CD4-positive, alpha-beta memory T cell (primary cell): ENCODE measurements at regions of chr3 and their contacts with region 1.

Region 1: DNA sequence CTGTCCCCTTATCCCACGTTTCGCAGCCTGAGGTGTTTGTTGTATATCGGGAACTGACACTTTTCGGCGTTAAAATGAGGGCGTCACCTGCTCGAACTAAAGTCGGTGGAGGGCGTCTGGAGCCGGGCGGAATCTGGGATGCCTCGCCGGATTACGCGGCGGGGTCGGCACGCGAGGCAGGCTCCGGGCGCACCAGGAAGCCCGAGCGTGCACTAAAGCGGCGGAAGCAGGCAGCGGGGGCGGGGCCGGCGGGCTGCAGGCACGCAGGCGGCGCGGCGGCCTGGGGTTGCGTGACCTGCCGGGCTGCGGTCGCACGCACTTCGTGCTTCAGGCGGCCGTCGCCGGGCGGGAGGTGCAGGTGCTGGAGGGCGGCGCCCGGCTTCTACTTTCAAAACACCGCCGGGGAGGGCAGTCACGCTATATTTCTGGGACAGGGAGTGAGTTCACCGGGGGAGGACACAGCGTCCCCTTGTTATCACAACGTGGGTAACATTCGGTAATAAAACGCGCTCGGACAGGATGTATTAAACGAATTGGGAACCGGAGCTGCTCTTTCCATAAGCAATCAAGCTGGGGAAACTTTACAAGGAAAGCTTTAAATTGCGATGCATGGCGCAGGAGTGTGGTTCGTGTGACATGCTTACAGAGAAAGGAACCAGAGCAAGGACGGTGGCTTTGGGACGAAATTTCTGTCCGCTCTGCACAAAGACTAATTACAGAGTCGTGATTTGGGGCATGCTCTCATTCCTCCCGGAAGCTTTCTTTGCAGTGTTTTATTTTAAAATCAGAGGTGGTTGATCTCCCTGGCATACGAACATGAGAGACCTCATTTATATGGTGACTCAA is 9.1 kb upstream of the LEKR1 start:
- DNase-seq: peak; percentile 79 to 85 (median 84)
- H3K4me3 ChIP-seq: peak overlapping the region; percentile 43 to 59
- H3K4me3 Mint-ChIP-seq: peak overlapping the region; percentile 91 to 97 (median 96)
- H3K27ac ChIP-seq: peak overlapping the region; percentile 73
- H3K27ac Mint-ChIP-seq: peak overlapping the region; percentile 91 to 98 (median 94)
- H3K4me1 ChIP-seq: peaks cover 39% of the 10 kb centered on the region
- H3K4me1 Mint-ChIP-seq: peaks cover 22 to 45% (median 35%) of the 10 kb centered on the region in 4 donors
- H3K27me3 ChIP-seq: no peaks in the 10 kb centered on the region
- H3K27me3 Mint-ChIP-seq: no peaks in the 10 kb centered on the region

Region 2: GRCh38 chr3:156483961-156484787 is 332.8 kb before region 1 on chr3:
- CTCF ChIA-PET with region 1: no interaction called
- POLR2A ChIA-PET with region 1: interaction called, 3 read pairs
- intact Hi-C with region 1: loop called (anchors 5 kb)
- DNase-seq: peak; percentile 55 to 81 (median 64)
- H3K4me3 ChIP-seq: peak overlapping the region; percentile 42 to 55
- H3K4me3 Mint-ChIP-seq: peak overlapping the region; percentile 21 to 87 (median 77)
- H3K27ac ChIP-seq: peak overlapping the region; percentile 63
- H3K27ac Mint-ChIP-seq: peak overlapping the region; percentile 77 to 94 (median 92)
- H3K4me1 ChIP-seq: peaks cover 43% of the 10 kb centered on the region
- H3K4me1 Mint-ChIP-seq: peaks cover 32 to 52% (median 39%) of the 10 kb centered on the region in 4 donors
- H3K27me3 ChIP-seq: no peaks in the 10 kb centered on the region
- H3K27me3 Mint-ChIP-seq: no peaks in the 10 kb centered on the region

Region 3: DNA sequence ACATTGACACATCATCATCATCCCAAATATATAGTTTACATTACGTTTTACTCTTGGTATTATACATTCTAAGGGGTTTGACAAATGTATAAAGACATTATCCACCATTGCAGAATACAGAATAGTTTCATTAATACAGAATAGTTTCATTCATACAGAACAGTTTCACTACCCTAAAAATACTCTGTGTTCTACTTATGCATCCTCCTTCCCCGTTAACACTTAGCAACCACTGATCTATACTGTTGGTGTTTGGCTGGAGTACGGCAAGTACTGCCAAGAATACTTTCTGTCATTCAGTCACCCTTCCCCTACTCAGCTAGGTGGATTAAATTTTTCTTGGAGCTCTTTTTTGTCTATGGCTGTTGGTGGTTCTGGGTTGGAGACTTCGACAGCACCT is 42.6 kb after region 1 on chr3:
- CTCF ChIA-PET with region 1: no interaction called
- POLR2A ChIA-PET with region 1: no interaction called
- intact Hi-C with region 1: no loop called
- DNase-seq: no peak
- H3K4me3 ChIP-seq: no peak overlapping the region
- H3K4me3 Mint-ChIP-seq: no peak overlapping the region
- H3K27ac ChIP-seq: no peak overlapping the region
- H3K27ac Mint-ChIP-seq: no peak overlapping the region
- H3K4me1 ChIP-seq: no peaks in the 10 kb centered on the region
- H3K4me1 Mint-ChIP-seq: no peaks in the 10 kb centered on the region
- H3K27me3 ChIP-seq: no peaks in the 10 kb centered on the region
- H3K27me3 Mint-ChIP-seq: no peaks in the 10 kb centered on the region

Region 4: GRCh38 chr3:157064402-157064801 is 247.4 kb after region 1 on chr3:
- CTCF ChIA-PET with region 1: interaction called, 5 read pairs
- POLR2A ChIA-PET with region 1: interaction called, 18 read pairs
- intact Hi-C with region 1: loop called (anchors 2 kb)
- DNase-seq: no peak
- H3K4me3 ChIP-seq: no peak overlapping the region
- H3K4me3 Mint-ChIP-seq: no peak overlapping the region
- H3K27ac ChIP-seq: no peak overlapping the region
- H3K27ac Mint-ChIP-seq: peak overlapping the region in 3 of 7 donors; percentile 39 to 70 (median 42)
- H3K4me1 ChIP-seq: peaks cover 38% of the 10 kb centered on the region
- H3K4me1 Mint-ChIP-seq: peaks cover 23 to 45% (median 36%) of the 10 kb centered on the region in 4 donors
- H3K27me3 ChIP-seq: no peaks in the 10 kb centered on the region
- H3K27me3 Mint-ChIP-seq: peaks cover 0 to 2% of the 10 kb centered on the region in 2 donors

Region 5: GRCh38 chr3:157130467-157131251 is 313.6 kb after region 1 on chr3:
- CTCF ChIA-PET with region 1: interaction called, 4 read pairs
- POLR2A ChIA-PET with region 1: interaction called, 10 read pairs
- intact Hi-C with region 1: loop called (anchors 1 kb)
- DNase-seq: peak; percentile 81 to 94 (median 84)
- H3K4me3 ChIP-seq: peak overlapping the region; percentile 4 to 45
- H3K4me3 Mint-ChIP-seq: peak overlapping the region; percentile 50 to 91 (median 76)
- H3K27ac ChIP-seq: peak overlapping the region; percentile 83
- H3K27ac Mint-ChIP-seq: peak overlapping the region; percentile 95 to 99 (median 97)
- H3K4me1 ChIP-seq: peaks cover 73% of the 10 kb centered on the region
- H3K4me1 Mint-ChIP-seq: peaks cover 48 to 86% (median 66%) of the 10 kb centered on the region in 4 donors
- H3K27me3 ChIP-seq: no peaks in the 10 kb centered on the region
- H3K27me3 Mint-ChIP-seq: no peaks in the 10 kb centered on the region